ENCODE measurements at regions of chr5 and their contacts with region 1.

Region 1: GRCh38 chr5:38556599-38557305 is at the start of gene LIFR:
- ATAC-seq: peak; percentile 73 to 91 (median 84)
- H3K4me3 ChIP-seq: peak within 1 kb of the TSS; percentile 77 to 95 (median 82)
- H3K27ac ChIP-seq: peak within 1 kb of the TSS; percentile 84 to 90
- H3K4me1 ChIP-seq: peaks cover 6 to 27% of the 10 kb centered on the region in 2 donors
- total RNA-seq, gene LIFR: 20.6 to 631 (median 74.4) TPM

Region 2: DNA sequence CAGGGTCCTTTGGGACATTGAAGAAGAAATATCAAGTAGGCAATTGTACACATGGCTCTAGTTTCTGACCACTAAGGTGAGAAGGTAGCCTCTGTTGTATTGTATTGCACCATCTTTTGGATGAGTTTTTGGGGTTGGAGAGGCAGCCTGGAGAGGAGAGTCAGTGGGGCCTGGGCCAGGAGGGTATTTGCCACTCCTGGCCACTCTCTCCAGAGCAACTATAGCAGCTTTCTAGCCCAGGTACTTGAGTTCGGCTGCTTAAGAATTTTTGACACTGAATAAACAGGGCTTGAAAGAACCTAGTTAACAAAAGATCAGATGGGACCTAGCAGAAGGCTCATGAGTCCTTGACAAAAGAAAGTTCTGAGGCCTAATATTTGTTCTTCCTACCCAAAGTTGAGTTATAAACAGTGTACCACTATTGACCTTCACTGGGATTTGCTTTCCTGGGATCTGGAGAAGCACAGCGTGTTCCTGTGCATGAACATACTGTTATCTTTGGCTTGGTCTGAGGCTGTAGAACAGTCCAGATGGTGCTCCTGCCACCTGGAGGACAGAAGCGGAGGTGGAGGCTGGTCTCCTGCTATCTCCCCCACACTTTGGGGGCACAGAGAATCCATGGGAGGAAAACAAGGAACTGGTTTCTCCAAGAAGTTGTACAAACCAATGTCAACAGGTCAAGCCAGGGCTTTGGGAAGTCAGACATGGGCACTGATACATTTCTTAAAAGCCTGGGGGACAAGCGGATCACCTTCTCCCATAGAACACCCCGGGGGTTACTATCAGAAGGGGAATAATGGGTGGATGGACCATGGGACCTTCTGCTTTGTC is 110.1 kb after region 1 on chr5:
- in situ Hi-C with region 1: loop called in 3 of 9 experiments (anchors 25 kb)
- ATAC-seq: peak in 4 of 8 experiments; percentile 23 to 42 (median 32)
- H3K4me3 ChIP-seq: no peak overlapping the region
- H3K27ac ChIP-seq: no peak overlapping the region
- H3K4me1 ChIP-seq: no peaks in the 10 kb centered on the region

Region 3: DNA sequence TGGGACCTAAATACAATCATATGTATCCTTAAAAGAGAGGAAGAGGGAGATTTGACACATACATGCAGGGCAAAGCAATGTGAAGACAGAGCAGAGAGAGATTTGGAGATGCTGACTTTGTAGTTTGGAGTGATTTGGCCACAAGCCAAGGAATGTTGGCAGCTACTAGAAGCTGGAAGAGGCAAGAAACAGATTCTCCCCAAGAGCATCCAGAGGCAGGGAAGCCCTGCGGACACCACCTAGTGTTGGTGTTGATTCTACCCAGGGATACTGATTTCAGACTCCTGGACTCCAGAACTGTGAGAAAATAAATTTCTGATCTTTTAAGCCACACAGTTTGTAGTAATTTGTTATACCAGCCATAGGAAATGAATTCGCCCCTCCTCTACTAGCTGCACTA is 224.2 kb after region 1 on chr5:
- in situ Hi-C with region 1: loop called in 1 of 9 experiments (anchors 25 kb)
- ATAC-seq: peak in 4 of 8 experiments; percentile 8 to 72 (median 22)
- H3K4me3 ChIP-seq: no peak overlapping the region
- H3K27ac ChIP-seq: no peak overlapping the region
- H3K4me1 ChIP-seq: peaks cover 0 to 6% of the 10 kb centered on the region in 2 donors